Naive thymus-derived CD4-positive, alpha-beta T cell (primary cell): ENCODE measurements at regions of chr2 and their contacts with region 1.

Region 1: DNA sequence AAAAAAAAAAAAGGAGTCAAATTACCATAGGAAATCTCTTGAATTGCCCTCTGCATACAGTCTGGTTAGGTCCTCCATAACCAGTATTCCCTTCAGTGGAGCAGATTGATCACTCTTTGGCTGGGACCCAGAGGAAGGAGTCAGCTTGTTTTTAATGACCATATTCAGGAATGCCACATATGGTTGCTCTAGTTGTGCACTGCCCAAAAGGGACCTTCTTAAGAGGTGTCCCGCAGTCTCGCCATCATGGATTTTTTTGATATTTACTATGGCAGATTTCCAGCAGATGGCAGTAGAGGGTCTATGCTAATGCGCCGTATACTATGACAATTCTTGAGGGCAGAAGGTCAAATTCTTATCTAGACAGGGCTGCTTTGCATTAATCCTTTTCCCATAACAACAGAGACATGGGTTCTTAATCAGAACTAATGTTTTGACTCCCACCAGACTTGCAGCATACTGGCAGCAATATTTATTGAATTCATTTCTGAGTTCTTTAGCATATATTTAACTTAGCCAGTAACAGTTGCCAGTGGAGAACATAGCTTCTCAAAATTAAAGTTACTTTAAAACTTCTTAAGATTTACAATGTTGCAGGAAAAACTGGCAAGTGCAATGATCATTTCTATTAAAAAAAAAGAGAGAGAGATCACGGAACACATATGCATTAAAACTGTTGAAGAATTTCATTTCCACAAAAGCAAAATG is 31.8 kb upstream of the INPP4A start:
- DNase-seq: peak in 8 of 9 donors; percentile 48 to 80 (median 72)
- ATAC-seq: peak; percentile 97
- H3K4me3 ChIP-seq: no peak overlapping the region
- H3K4me3 Mint-ChIP-seq: no peak overlapping the region
- H3K27ac ChIP-seq: no peak overlapping the region
- H3K27ac Mint-ChIP-seq: peak overlapping the region in 2 of 9 donors; percentile 44 to 46
- H3K4me1 ChIP-seq: peaks cover 0 to 5% of the 10 kb centered on the region in 2 donors
- H3K4me1 Mint-ChIP-seq: peaks cover 4 to 14% (median 6%) of the 10 kb centered on the region in 7 donors
- H3K27me3 ChIP-seq: no peaks in the 10 kb centered on the region
- H3K27me3 Mint-ChIP-seq: peaks cover 0 to 6% (median 0%) of the 10 kb centered on the region in 5 donors

Region 2: DNA sequence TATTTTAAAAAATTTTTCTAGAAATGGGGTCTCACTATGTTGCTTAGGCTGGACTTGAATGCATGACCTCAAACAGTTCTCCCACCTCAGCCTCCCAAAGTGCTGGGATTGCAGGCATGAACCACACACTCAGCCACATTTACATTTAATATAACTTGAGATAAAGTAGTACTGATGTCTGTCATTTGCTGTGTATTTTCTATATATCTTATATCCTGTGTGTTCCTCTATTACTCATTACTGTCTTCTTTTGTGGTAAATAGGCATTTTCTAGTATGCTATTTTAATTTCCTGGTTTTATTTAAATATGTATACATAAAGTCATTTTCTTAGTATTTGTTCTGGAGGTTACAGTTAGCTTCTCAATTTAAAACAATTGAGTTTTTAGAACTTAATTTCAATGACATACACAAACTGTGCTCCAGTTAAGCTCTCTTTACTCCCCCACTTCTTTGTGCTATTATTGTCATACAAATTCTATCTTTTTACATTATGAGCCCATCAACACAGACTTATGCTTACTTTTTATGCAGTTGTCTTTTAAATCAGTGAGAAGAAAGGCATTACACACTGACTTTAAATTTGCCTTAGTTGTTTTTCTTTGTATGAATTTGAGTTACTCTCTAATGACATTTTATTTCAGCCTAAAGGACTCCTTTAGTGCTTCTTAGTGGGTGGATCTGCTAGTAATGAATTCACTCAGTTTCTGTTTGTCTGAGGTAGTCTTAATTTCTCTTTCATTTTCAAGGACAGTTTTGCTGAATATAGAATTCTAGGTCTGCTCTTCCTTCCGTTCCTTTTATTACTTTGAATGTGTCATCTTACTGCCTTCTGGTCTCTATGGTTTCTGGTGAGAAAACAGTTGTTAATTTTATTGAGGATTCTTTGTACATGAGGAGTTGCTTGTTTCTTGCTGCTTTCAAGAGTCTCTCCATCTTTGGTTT is 25.6 kb after region 1 on chr2:
- CTCF ChIA-PET with region 1: interaction called, 4 read pairs
- POLR2A ChIA-PET with region 1: no interaction called
- intact Hi-C with region 1: loop called in 1 of 2 experiments (anchors 1 kb)
- DNase-seq: peak in 1 of 9 donors; percentile 40
- ATAC-seq: peak; percentile 82
- H3K4me3 ChIP-seq: no peak overlapping the region
- H3K4me3 Mint-ChIP-seq: peak overlapping the region in 1 of 10 donors; percentile 74
- H3K27ac ChIP-seq: no peak overlapping the region
- H3K27ac Mint-ChIP-seq: peak overlapping the region in 6 of 9 donors; percentile 1 to 92 (median 8)
- H3K4me1 ChIP-seq: no peaks in the 10 kb centered on the region
- H3K4me1 Mint-ChIP-seq: peaks cover 0 to 35% (median 5%) of the 10 kb centered on the region in 7 donors
- H3K27me3 ChIP-seq: no peaks in the 10 kb centered on the region
- H3K27me3 Mint-ChIP-seq: no peaks in the 10 kb centered on the region

Region 3: DNA sequence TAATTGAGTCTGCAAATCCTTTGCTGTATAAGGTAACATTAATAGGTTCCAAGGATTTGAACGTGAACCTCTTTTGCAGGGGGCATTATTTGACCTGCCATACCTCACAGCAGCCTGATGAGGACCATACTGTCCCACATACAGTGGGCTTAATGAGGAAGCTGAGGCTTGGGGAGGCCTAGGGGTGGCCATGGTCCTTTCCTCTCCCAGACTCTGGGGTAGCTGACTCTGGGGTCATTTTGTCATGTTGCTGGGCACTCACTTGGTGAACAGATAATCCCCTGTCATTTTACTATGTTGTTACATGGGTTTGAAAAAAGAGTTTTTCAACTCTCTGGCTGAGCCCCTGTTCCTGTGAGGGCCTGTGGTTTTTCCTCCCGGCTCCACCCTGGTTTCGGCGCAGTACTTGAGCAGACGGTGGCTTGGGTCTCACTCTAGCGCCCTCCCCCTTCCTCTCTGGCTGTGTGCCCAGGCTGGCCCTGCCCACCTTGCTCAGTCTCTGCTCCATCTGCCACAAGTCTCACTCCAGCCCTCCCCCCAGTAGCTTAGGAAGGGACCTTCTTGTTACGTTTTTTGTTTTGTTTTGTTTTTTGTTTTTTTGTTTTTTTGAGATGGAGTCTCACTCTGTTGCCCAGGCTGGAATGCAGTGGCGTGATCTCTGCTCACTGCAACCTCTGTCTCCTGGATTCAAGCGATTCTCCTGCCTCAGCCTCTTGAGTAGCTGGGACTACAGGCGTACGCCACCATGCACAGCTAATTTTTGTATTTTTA is 52.7 kb after region 1 on chr2:
- CTCF ChIA-PET with region 1: interaction called, 3 read pairs
- POLR2A ChIA-PET with region 1: interaction called, 3 read pairs
- intact Hi-C with region 1: loop called (anchors 1 to 2 kb)
- DNase-seq: peak; percentile 53 to 92 (median 85)
- ATAC-seq: peak; percentile 74
- H3K4me3 ChIP-seq: peak overlapping the region; percentile 61
- H3K4me3 Mint-ChIP-seq: peak overlapping the region; percentile 78 to 98 (median 87)
- H3K27ac ChIP-seq: peak overlapping the region; percentile 85
- H3K27ac Mint-ChIP-seq: peak overlapping the region; percentile 93 to 99 (median 96)
- H3K4me1 ChIP-seq: peaks cover 85 to 87% of the 10 kb centered on the region in 2 donors
- H3K4me1 Mint-ChIP-seq: peaks cover 70 to 95% (median 88%) of the 10 kb centered on the region in 7 donors
- H3K27me3 ChIP-seq: no peaks in the 10 kb centered on the region
- H3K27me3 Mint-ChIP-seq: no peaks in the 10 kb centered on the region

Region 4: DNA sequence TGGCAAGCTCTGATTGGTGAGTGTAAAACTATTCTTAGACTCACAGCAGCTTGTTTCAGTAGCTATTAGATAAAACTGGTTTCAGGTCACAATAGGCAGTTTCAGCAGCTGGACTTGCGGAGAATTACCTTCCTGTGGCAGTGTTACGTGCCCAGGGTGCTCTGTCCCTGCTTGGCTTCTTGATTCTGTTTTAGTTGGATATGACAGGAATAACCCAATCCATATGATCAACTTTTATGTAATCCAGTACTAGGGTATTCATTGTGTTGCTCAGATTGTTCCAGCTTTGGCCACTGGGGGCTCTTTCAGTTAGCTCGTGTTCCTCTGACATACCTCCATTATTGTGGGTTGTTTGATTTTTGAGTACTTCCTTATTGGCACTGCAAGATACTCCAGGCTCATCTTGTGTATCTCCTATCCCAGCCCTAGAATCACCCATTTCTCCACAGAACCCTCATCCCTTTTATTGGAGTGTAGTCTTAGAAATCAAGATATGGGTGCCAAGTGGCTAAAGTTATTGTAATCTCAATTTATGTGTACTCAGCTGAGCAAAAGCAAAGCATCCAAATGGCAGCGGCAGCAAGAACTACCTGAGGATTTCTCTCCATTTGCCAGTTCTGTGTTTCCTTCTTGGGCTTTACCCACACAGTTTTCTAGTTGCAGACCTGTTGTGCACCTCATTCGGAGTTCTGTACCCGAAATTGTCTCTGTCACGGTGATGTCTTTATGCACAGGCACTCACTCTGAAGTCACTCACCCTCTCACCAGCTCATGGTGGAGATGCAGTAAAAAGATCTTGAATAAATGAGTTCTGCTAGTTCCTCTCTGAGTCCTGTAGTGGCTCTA is 75.1 kb after region 1 on chr2:
- CTCF ChIA-PET with region 1: interaction called, 5 read pairs
- POLR2A ChIA-PET with region 1: no interaction called
- intact Hi-C with region 1: loop called in 1 of 2 experiments (anchors 1 kb)
- DNase-seq: peak in 7 of 9 donors; percentile 49 to 68 (median 59)
- ATAC-seq: peak; percentile 90
- H3K4me3 ChIP-seq: no peak overlapping the region
- H3K4me3 Mint-ChIP-seq: peak overlapping the region; percentile 16 to 82 (median 58)
- H3K27ac ChIP-seq: peak overlapping the region; percentile 23
- H3K27ac Mint-ChIP-seq: peak overlapping the region; percentile 38 to 93 (median 75)
- H3K4me1 ChIP-seq: peaks cover 69 to 76% of the 10 kb centered on the region in 2 donors
- H3K4me1 Mint-ChIP-seq: peaks cover 56 to 100% (median 99%) of the 10 kb centered on the region in 7 donors
- H3K27me3 ChIP-seq: no peaks in the 10 kb centered on the region
- H3K27me3 Mint-ChIP-seq: no peaks in the 10 kb centered on the region

Region 5: GRCh38 chr2:98552499-98553179 is 139.7 kb after region 1 on chr2:
- CTCF ChIA-PET with region 1: interaction called, 8 read pairs
- POLR2A ChIA-PET with region 1: no interaction called
- intact Hi-C with region 1: loop called in 1 of 2 experiments (anchors 1 kb)
- DNase-seq: no peak
- ATAC-seq: no peak
- H3K4me3 ChIP-seq: no peak overlapping the region
- H3K4me3 Mint-ChIP-seq: peak overlapping the region in 1 of 10 donors; percentile 38
- H3K27ac ChIP-seq: no peak overlapping the region
- H3K27ac Mint-ChIP-seq: peak overlapping the region in 8 of 9 donors; percentile 3 to 89 (median 58)
- H3K4me1 ChIP-seq: peaks cover 0 to 3% of the 10 kb centered on the region in 2 donors
- H3K4me1 Mint-ChIP-seq: peaks cover 32 to 72% (median 56%) of the 10 kb centered on the region in 7 donors
- H3K27me3 ChIP-seq: no peaks in the 10 kb centered on the region
- H3K27me3 Mint-ChIP-seq: no peaks in the 10 kb centered on the region

Region 6: GRCh38 chr2:98601532-98602132 is 188.7 kb after region 1 on chr2:
- CTCF ChIA-PET with region 1: no interaction called
- POLR2A ChIA-PET with region 1: no interaction called
- intact Hi-C with region 1: loop called (anchors 1 kb)
- DNase-seq: no peak
- ATAC-seq: peak; percentile 72
- H3K4me3 ChIP-seq: no peak overlapping the region
- H3K4me3 Mint-ChIP-seq: no peak overlapping the region
- H3K27ac ChIP-seq: peak overlapping the region; percentile 6
- H3K27ac Mint-ChIP-seq: peak overlapping the region in 7 of 9 donors; percentile 11 to 77 (median 41)
- H3K4me1 ChIP-seq: peaks cover 7 to 18% of the 10 kb centered on the region in 2 donors
- H3K4me1 Mint-ChIP-seq: peaks cover 16 to 41% (median 37%) of the 10 kb centered on the region in 7 donors
- H3K27me3 ChIP-seq: no peaks in the 10 kb centered on the region
- H3K27me3 Mint-ChIP-seq: no peaks in the 10 kb centered on the region

Region 7: DNA sequence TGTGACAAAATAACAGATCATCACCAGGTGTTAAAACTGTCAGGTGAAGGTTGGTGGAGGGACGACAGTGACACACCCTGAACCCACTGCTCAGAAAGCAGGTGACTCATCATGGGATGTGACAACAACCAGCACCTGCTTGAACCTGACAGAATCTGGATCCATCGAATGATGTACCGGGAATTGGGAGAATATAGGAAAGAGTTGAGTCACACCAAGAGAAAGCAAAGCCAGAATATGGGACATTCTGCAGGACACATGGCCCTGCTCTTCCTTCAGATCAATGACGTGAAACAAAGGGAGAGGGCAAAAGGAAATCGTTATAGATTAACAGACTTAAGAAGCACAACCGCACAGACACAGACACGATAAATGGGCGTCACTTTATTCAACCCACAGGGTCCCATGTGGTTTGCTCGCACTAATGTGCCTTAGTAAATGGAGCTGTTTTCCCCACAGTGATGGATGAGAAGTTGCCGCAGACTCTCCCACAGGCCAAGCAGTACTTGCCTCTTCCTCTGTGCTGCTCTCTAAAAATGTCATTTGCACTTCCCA is 423.0 kb after region 1 on chr2:
- CTCF ChIA-PET with region 1: interaction called, 4 read pairs
- POLR2A ChIA-PET with region 1: no interaction called
- intact Hi-C with region 1: loop called (anchors 1 kb)
- DNase-seq: peak in 7 of 9 donors; percentile 55 to 78 (median 72)
- ATAC-seq: peak; percentile 87
- H3K4me3 ChIP-seq: peak overlapping the region; percentile 1
- H3K4me3 Mint-ChIP-seq: peak overlapping the region; percentile 32 to 79 (median 52)
- H3K27ac ChIP-seq: peak overlapping the region; percentile 66
- H3K27ac Mint-ChIP-seq: peak overlapping the region; percentile 78 to 98 (median 88)
- H3K4me1 ChIP-seq: peaks cover 16 to 43% of the 10 kb centered on the region in 2 donors
- H3K4me1 Mint-ChIP-seq: peaks cover 24 to 51% (median 28%) of the 10 kb centered on the region in 7 donors
- H3K27me3 ChIP-seq: no peaks in the 10 kb centered on the region
- H3K27me3 Mint-ChIP-seq: peaks cover 0 to 17% (median 0%) of the 10 kb centered on the region in 5 donors